ENCODE measurements at regions of chr3 and their contacts with region 1.

Region 1: GRCh38 chr3:137032465-137033120 is 74.8 kb downstream of the IL20RB start:
- DNase-seq: peak; percentile 89
- H3K4me3 ChIP-seq: peak overlapping the region in 3 of 4 donors; percentile 8 to 34 (median 13)
- H3K27ac ChIP-seq: no peak overlapping the region
- H3K4me1 ChIP-seq: peaks cover 0 to 9% (median 4%) of the 10 kb centered on the region in 4 donors
- H3K27me3 ChIP-seq: peaks cover 24% of the 10 kb centered on the region
- CTCF ChIP-seq: peak; percentile 84 to 99 (median 97)
- EP300 ChIP-seq: no peak
- POLR2A ChIP-seq: no peak

Region 2: GRCh38 chr3:136353461-136353860 is 679.1 kb before region 1 on chr3:
- in situ Hi-C with region 1: no loop called
- intact Hi-C with region 1: no loop called
- DNase-seq: no peak
- H3K4me3 ChIP-seq: no peak overlapping the region
- H3K27ac ChIP-seq: no peak overlapping the region
- H3K4me1 ChIP-seq: peaks cover 0 to 8% (median 0%) of the 10 kb centered on the region in 4 donors
- H3K27me3 ChIP-seq: no peaks in the 10 kb centered on the region
- CTCF ChIP-seq: no peak
- EP300 ChIP-seq: no peak
- POLR2A ChIP-seq: no peak

Region 3: GRCh38 chr3:137509355-137510045 is 476.9 kb after region 1 on chr3:
- in situ Hi-C with region 1: no loop called
- intact Hi-C with region 1: no loop called
- DNase-seq: no peak
- H3K4me3 ChIP-seq: no peak overlapping the region
- H3K27ac ChIP-seq: no peak overlapping the region
- H3K4me1 ChIP-seq: no peaks in the 10 kb centered on the region
- H3K27me3 ChIP-seq: no peaks in the 10 kb centered on the region
- CTCF ChIP-seq: no peak
- EP300 ChIP-seq: no peak
- POLR2A ChIP-seq: no peak

Region 4: DNA sequence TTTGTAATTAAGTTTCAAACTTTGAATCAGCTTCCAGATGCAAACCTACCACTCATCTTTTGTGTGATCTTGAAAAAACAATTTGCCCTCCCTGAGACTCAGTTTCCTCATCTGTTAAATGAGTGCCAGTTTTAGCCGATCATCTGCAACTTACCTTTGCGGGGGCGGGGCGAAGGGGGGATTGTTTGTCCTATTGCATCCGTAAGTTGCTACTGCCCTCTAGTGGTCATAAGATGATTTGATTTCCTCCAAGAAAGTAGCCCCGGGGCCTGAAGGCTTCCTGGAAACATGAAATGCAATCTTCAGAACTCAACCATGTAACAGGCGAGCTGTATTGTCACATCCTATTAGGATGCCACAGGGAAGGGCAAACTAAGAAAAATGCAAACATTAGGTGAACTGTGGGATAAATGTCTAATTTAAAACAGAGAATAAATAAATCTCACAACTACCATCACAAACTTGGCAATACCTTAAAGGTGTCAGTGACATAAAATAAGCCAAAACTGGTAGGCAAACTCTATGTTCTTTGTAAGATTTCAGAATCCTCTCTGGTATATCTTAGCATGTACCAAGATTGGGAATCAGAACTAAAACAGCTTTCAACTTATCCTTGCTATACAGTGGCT is 913.9 kb after region 1 on chr3:
- in situ Hi-C with region 1: no loop called
- intact Hi-C with region 1: loop called (anchors 5 kb)
- DNase-seq: peak; percentile 27
- H3K4me3 ChIP-seq: no peak overlapping the region
- H3K27ac ChIP-seq: no peak overlapping the region
- H3K4me1 ChIP-seq: no peaks in the 10 kb centered on the region
- H3K27me3 ChIP-seq: no peaks in the 10 kb centered on the region
- CTCF ChIP-seq: peak; percentile 48 to 68 (median 61)
- EP300 ChIP-seq: no peak
- POLR2A ChIP-seq: no peak

Measured in transverse colon (tissue), 4 donors.